ENCODE measurements at regions of chr3 and their contacts with region 1.

Region 1: GRCh38 chr3:52983336-52983807 is 62.5 kb downstream of the SFMBT1 start:
- DNase-seq: peak; percentile 81
- H3K4me3 Mint-ChIP-seq: peak overlapping the region; percentile 31
- H3K27ac Mint-ChIP-seq: peak overlapping the region; percentile 85
- H3K4me1 Mint-ChIP-seq: peaks cover 42% of the 10 kb centered on the region
- H3K27me3 Mint-ChIP-seq: no peaks in the 10 kb centered on the region

Region 2: GRCh38 chr3:52851348-52851747 is 132.0 kb before region 1 on chr3:
- CTCF ChIA-PET with region 1: no interaction called
- intact Hi-C with region 1: loop called (anchors 5 kb)
- DNase-seq: peak; percentile 42
- H3K4me3 Mint-ChIP-seq: no peak overlapping the region
- H3K27ac Mint-ChIP-seq: no peak overlapping the region
- H3K4me1 Mint-ChIP-seq: no peaks in the 10 kb centered on the region
- H3K27me3 Mint-ChIP-seq: no peaks in the 10 kb centered on the region

Region 3: DNA sequence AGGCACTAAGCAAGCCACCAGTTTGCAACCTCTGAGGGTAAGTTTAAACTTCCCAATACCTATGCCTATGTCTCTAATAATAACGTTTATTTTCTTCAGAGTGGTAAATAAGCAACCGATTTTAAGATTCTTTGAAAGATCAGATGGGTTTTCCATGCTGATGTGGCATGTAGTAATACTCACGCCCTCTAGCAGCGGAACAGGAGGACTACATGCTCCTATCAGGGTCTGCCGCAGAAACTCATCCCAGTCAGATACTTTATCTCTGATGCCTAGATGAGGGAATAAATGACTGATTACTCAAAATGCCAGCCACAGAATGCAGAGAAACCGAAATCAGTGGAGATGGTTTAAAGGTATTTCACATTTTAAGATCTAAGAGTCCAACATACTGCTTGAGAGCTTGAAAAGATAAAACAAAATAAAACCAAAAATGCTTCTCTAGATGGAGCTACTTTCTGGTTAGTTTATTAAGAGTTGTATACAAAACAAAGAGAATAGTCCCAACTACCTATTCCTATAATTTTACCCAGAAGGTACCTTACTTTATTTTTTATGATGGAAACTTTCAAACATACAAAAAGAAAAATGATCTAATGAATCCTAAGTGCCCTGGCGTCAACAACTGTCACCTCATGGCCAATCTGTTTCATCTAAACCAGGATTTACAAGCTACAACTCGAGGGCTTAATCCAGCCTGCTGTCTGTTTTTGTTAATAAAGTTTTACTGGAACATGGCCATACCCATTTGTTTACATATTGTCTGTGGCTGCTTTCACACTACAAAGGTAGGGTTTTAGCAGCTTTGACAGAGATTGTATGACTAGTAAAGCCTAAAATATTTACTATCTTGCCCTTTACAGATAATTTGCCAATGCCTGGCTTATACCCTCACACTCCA is 48.5 kb before region 1 on chr3:
- CTCF ChIA-PET with region 1: interaction called, 7 read pairs
- intact Hi-C with region 1: loop called (anchors 1 kb)
- DNase-seq: peak; percentile 76
- H3K4me3 Mint-ChIP-seq: no peak overlapping the region
- H3K27ac Mint-ChIP-seq: no peak overlapping the region
- H3K4me1 Mint-ChIP-seq: peaks cover 10% of the 10 kb centered on the region
- H3K27me3 Mint-ChIP-seq: no peaks in the 10 kb centered on the region

Region 4: GRCh38 chr3:53023068-53023823 is 39.9 kb after region 1 on chr3:
- CTCF ChIA-PET with region 1: interaction called, 5 read pairs
- intact Hi-C with region 1: loop called (anchors 2 kb)
- DNase-seq: no peak
- H3K4me3 Mint-ChIP-seq: no peak overlapping the region
- H3K27ac Mint-ChIP-seq: no peak overlapping the region
- H3K4me1 Mint-ChIP-seq: peaks cover 54% of the 10 kb centered on the region
- H3K27me3 Mint-ChIP-seq: no peaks in the 10 kb centered on the region

Region 5: GRCh38 chr3:53045518-53046170 is 62.3 kb after region 1 on chr3 and contains the start of gene SFMBT1:
- CTCF ChIA-PET with region 1: interaction called, 4 read pairs
- intact Hi-C with region 1: loop called (anchors 1 kb)
- DNase-seq: peak; percentile 68
- H3K4me3 Mint-ChIP-seq: peak within 1 kb of the TSS; percentile 90
- H3K27ac Mint-ChIP-seq: peak within 1 kb of the TSS; percentile 90
- H3K4me1 Mint-ChIP-seq: peaks cover 42% of the 10 kb centered on the region
- H3K27me3 Mint-ChIP-seq: no peaks in the 10 kb centered on the region
- total RNA-seq, gene SFMBT1: 15.1 to 15.4 TPM

Region 6: DNA sequence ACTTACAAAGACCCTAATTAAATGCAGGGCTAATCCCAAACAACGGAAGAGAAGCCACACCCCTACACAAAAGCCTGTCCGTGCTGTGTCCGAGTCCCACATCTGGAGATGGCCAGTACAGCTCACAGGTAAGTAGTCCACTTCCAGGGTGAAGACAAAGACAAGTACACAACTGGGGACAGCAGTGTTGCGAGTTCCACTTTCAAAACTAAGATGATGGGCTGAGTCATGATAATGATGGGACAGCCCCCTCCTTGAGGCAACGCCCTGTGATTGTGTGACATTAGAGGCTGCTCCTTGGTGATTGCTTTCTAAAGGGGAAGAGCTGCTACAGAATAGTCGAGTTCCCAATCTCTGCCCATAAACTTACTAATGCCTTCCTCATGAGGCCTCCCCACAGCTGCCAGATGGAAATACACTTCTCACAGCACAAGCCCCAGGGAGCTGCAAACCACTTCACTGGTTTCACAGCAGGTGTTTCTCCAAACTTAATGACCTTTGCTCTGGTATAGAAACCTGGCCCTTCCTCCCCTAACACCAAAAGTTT is 119.3 kb after region 1 on chr3:
- CTCF ChIA-PET with region 1: no interaction called
- intact Hi-C with region 1: loop called (anchors 1 kb)
- DNase-seq: peak; percentile 84
- H3K4me3 Mint-ChIP-seq: peak overlapping the region; percentile 11
- H3K27ac Mint-ChIP-seq: peak overlapping the region; percentile 80
- H3K4me1 Mint-ChIP-seq: peaks cover 68% of the 10 kb centered on the region
- H3K27me3 Mint-ChIP-seq: no peaks in the 10 kb centered on the region

Region 7: GRCh38 chr3:53180305-53181023 is 197.1 kb after region 1 on chr3:
- CTCF ChIA-PET with region 1: no interaction called
- intact Hi-C with region 1: no loop called
- DNase-seq: no peak
- H3K4me3 Mint-ChIP-seq: no peak overlapping the region
- H3K27ac Mint-ChIP-seq: no peak overlapping the region
- H3K4me1 Mint-ChIP-seq: no peaks in the 10 kb centered on the region
- H3K27me3 Mint-ChIP-seq: no peaks in the 10 kb centered on the region